Activated CD4-positive, alpha-beta memory T cell treated with anti-CD3 and anti-CD28 coated beads, Interleukin-2, amount 10 ng/mL, durations not matched to agents 7 days and 5 days (primary cell): ENCODE measurements at regions of chr1 and their contacts with region 1.

Region 1: DNA sequence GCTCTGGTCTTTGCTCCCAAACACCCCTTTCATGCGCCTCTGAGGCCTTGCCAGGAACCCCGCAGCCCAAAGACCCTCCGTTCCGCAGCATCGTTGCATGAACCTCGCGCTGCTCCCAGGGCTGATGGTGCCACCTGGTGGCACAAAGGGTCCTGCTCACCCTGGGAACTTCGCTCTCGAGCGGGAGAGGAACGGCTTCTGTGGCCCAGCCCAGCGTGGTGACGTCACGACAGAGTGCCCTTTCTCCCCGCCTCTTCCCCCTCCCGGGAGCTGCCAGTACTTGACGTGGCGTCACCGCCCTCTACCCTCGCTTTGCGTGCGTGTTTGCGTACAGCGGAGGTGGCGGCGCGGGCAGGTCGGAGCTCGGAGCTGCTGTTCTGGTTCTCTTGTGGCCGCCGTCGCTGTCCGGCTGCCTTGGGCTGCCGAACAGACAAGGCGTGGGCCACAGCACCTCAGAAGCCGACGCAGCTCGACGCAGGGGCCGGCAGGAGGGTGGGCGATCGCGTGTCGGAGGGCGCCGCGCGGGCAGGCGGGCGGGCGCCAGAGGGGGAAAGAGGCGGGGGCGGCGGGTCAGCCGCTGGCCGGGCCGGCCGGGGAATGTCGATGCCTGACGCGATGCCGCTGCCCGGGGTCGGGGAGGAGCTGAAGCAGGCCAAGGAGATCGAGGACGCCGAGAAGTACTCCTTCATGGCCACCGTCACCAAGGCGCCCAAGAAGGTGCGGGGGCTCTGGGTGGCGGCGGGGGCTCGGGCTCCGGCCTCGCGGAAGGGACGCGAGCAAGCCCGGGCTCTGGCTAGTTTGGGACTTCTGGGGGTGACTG is at the start of gene AHCYL1:
- DNase-seq: peak; percentile 99
- H3K4me3 Mint-ChIP-seq: peak within 1 kb of the TSS; percentile 99
- H3K27ac Mint-ChIP-seq: peak within 1 kb of the TSS; percentile 84
- H3K4me1 Mint-ChIP-seq: peaks cover 41% of the 10 kb centered on the region
- H3K27me3 Mint-ChIP-seq: peaks cover 2% of the 10 kb centered on the region
- total RNA-seq, gene AHCYL1: 56.5 to 57.0 TPM

Region 2: DNA sequence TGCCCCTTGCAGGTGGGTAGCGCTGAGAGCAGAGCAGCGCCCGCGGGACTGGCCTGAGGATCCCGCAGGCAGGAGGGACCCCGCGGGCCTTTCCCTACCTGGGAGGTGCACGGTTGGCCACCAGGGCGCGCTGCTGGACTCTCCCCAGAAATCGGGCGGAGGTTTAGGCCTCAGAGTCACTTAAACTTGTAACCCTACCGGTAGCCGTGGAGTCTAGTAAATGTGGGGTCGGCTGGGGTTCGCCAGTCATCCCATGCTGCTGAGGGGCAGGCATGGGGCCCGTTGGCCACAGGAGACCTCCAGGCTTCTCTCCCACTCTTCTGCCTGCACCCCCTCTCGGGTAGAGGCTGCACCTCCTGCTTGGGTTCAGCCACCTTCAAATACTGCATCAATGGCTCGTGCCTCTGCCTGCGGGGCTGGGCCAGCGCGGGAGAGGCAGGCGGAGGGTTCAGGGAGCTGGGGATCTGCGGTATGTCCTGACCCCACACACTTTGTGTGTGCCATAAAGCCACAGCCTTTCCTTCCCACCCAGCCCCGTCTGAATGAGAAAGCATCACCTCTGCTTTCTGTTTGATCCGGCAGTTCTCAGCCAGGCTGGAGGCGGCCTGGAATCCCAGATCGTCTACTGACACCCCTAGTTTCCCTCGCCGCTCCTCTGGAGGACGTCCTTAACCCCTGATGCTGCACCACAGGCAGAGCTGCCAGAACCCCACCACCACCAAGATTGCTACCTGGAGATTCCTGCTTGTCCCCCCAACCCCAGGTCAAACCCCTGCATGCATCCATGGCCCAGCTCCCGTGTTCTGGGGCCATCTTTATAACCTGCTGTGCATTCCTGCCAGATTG is 341.1 kb before region 1 on chr1:
- CTCF ChIA-PET with region 1: interaction called, 149 read pairs
- POLR2A ChIA-PET with region 1: interaction called, 4 read pairs
- DNase-seq: peak; percentile 88
- H3K4me3 Mint-ChIP-seq: no peak overlapping the region
- H3K27ac Mint-ChIP-seq: no peak overlapping the region
- H3K4me1 Mint-ChIP-seq: peaks cover 18% of the 10 kb centered on the region
- H3K27me3 Mint-ChIP-seq: peaks cover 7% of the 10 kb centered on the region

Region 3: DNA sequence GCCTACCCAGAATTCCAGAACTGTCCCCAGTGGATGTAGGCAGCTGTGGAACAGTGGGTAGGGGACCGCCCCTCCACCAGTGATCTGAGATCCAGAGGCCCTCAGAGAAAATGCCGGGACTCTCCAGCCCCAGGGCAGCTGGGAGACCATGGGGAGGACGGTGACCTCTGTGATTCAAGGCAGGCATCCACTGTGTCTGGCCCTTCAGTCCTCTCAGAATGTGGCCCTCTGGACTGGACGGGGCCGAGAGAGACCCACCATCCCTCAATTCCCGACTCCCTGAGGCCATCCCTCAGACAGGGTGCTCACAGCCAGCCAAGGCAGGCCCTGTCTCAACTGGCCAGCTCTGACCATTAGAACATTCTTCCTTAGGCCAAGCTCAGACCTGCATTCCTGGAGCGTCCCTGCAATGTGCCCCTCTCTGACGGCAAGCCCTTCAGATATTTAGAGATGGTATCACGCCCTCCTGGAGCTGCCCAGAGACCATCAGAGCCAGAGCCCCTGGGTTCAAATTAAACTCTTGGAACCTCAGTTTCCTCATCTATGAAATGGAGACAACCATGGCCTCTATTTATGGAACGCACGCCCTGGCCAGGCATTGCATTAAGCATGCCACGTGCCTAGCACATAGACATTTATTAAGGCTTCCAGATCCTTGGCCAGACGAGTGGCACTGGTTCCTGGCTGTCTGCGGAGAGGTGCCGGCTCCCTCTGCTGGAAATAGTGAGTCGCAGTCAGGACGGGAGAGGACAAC is 211.3 kb before region 1 on chr1:
- CTCF ChIA-PET with region 1: interaction called, 655 read pairs
- POLR2A ChIA-PET with region 1: interaction called, 71 read pairs
- DNase-seq: peak; percentile 79
- H3K4me3 Mint-ChIP-seq: no peak overlapping the region
- H3K27ac Mint-ChIP-seq: no peak overlapping the region
- H3K4me1 Mint-ChIP-seq: peaks cover 17% of the 10 kb centered on the region
- H3K27me3 Mint-ChIP-seq: peaks cover 7% of the 10 kb centered on the region

Region 4: DNA sequence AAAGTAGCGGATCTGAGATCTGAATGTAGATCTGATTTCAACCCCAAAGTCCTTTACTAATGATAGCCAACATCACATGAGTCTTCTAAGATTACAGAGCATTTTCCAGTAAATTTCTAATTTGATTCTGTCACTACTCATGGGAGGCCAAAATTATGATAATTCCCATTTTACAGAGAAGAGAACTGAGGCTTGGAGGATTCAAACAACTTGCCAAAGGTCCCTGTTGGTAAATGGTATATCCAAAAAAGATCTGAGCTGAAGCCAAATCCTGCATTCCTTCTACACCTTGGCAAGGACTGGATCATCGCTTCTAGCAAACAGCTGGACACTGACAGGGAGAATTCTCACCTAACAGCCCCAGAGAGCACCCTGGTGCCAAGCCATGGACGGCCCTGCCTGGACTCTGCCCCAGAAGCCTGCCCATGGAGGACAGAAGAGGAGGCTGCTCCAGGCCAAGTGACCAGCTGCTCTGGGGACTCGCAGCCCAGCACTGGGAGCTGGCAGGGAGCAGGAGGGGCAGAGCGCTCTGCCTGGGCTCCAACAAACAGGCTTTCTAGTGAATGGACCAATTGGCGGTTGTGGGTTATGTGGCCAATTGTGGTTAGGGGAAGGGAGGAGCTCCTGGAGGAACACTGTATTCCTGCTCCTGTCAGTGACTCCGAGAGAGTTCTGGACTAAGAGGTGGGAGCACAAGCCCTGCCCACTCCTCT is 80.4 kb before region 1 on chr1:
- CTCF ChIA-PET with region 1: interaction called, 27 read pairs
- POLR2A ChIA-PET with region 1: interaction called, 4 read pairs
- DNase-seq: no peak
- H3K4me3 Mint-ChIP-seq: no peak overlapping the region
- H3K27ac Mint-ChIP-seq: peak overlapping the region; percentile 5
- H3K4me1 Mint-ChIP-seq: peaks cover 56% of the 10 kb centered on the region
- H3K27me3 Mint-ChIP-seq: no peaks in the 10 kb centered on the region

Region 5: GRCh38 chr1:109933856-109934711 is 50.6 kb before region 1 on chr1:
- CTCF ChIA-PET with region 1: no interaction called
- POLR2A ChIA-PET with region 1: no interaction called
- DNase-seq: peak; percentile 54
- H3K4me3 Mint-ChIP-seq: no peak overlapping the region
- H3K27ac Mint-ChIP-seq: no peak overlapping the region
- H3K4me1 Mint-ChIP-seq: peaks cover 24% of the 10 kb centered on the region
- H3K27me3 Mint-ChIP-seq: peaks cover 19% of the 10 kb centered on the region

Region 6: DNA sequence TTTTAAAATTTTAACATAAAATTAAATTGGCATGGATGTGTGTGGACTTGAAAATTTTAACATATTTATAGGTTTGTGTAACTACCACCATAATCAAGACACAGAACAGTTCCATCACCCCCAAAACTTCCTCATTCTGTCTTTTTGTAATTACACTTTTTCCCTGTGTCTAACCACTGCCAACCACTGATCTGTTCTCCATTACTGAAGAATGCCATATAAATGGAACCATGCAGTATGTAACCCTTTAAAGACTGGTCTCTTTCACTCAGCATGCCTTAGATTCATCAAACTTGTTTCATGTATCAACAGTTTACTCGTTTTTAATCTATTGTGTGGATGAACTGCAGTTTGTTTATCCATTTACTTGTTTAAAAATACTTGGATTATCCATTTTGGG is 13.1 kb before region 1 on chr1:
- CTCF ChIA-PET with region 1: interaction called, 11 read pairs
- POLR2A ChIA-PET with region 1: interaction called, 5 read pairs
- DNase-seq: no peak
- H3K4me3 Mint-ChIP-seq: no peak overlapping the region
- H3K27ac Mint-ChIP-seq: no peak overlapping the region
- H3K4me1 Mint-ChIP-seq: no peaks in the 10 kb centered on the region
- H3K27me3 Mint-ChIP-seq: peaks cover 28% of the 10 kb centered on the region

Region 7: DNA sequence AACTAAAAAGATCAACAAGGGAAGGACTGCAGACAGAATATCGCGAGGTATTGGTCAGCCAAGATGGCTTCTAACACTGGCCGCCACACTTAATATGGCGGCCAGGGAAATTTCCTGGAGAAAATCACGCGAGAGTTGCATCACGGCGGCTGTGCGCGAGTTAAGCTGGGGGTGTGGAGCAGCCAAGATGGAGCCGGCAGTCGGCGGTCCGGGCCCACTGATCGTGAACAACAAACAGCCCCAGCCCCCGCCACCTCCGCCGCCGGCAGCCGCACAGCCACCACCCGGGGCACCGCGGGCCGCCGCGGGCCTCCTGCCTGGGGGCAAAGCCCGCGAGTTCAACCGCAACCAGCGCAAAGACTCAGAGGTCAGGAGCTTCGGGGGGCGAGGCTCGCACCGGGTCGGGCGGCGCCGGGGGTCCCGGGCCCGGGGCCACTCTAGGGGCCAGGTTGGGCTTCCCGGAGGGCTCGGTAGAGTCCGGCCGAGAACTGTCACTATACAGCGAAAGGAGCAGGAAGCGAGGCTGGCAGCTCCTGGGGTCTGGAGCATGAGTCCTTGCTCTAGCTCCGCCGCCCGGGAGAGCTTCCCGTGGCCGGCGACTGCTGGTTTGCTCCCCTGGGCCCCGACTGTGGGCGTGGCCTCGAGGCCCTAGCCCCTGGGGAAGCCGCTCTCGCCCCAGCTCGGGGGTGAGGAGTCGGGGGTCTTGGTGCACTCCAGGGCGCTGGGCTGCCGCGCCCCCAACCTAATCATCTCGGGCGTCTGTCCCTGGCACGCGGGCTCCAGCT is 50.0 kb after region 1 on chr1 and contains the start of gene STRIP1:
- CTCF ChIA-PET with region 1: interaction called, 13 read pairs
- POLR2A ChIA-PET with region 1: interaction called, 9 read pairs
- DNase-seq: peak; percentile 95
- H3K4me3 Mint-ChIP-seq: peak within 1 kb of the TSS; percentile 90
- H3K27ac Mint-ChIP-seq: peak within 1 kb of the TSS; percentile 74
- H3K4me1 Mint-ChIP-seq: peaks cover 62% of the 10 kb centered on the region
- H3K27me3 Mint-ChIP-seq: no peaks in the 10 kb centered on the region
- total RNA-seq, gene STRIP1: 34.1 to 34.7 TPM

Region 8: DNA sequence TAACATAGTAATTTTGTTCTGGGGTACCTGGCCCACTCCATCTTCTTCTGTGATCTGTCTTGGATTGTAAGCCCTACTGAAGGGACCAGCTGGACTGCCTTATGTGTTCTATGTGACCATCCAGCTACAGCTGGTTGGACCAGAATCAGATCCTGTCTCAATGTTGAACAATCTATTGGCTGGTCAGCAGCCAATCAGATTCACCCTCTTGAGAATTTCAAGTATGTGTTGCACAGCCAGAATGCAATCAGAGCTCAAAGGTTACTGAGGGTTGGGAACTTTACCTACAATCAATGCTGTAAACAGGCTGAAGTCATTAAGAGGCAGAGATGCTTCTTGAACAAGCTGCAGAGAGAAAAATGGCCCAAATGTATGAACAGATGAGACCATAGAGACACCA is 287.4 kb after region 1 on chr1:
- CTCF ChIA-PET with region 1: no interaction called
- POLR2A ChIA-PET with region 1: no interaction called
- DNase-seq: no peak
- H3K4me3 Mint-ChIP-seq: no peak overlapping the region
- H3K27ac Mint-ChIP-seq: no peak overlapping the region
- H3K4me1 Mint-ChIP-seq: no peaks in the 10 kb centered on the region
- H3K27me3 Mint-ChIP-seq: peaks cover 26% of the 10 kb centered on the region